ENCODE measurements at regions of chr6 and their contacts with region 1.

Region 1: GRCh38 chr6:15285682-15286294 is 39.9 kb downstream of the JARID2 start:
- DNase-seq: peak; percentile 37
- H3K4me3 ChIP-seq: no peak overlapping the region
- H3K27ac ChIP-seq: no peak overlapping the region
- H3K4me1 ChIP-seq: peaks cover 18% of the 10 kb centered on the region
- H3K27me3 ChIP-seq: no peaks in the 10 kb centered on the region
- CTCF ChIP-seq: no peak
- POLR2A ChIP-seq: no peak

Region 2: DNA sequence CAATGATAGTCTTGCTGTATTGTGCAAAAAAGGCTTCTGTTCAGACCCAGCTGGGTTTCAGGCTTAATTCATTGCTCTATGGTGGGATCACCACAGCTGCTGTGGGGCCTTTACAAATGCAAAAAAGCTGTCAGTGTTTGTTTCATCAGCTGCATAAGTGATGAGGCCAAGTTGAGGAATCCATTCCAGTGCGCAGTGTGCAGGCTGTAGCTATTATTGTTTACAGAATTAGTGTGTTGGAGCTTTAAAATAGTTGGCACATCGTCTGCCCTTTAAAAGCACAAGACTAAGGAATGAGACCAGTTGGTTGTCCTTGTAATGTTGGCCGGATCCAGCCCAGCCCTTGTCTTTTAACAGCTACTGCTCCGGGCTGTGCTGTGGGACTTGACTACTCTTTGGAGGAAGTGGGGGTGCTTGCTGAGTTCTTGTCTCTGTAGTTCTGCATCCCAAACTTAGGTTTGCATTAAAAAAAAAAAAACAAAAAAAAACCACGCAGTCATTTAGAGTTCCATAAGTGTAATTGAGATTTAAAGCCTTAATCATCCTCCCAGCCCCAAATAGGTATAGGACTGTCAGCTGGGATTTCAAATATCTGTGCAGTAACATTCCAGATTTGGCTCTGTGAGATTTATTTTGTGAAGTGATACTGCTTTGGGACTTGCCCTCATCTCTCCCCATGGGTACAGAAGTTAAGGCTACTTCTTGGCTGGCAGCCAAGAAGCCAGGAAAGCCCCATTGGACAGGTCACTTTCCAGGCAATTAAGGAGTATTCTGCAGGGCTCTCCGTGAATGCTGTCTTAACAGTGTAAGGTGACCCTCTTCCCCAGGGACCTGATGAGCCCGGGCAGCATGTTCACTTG is 20.7 kb before region 1 on chr6:
- CTCF ChIA-PET with region 1: interaction called, 3 read pairs
- POLR2A ChIA-PET with region 1: interaction called, 10 read pairs
- dilution Hi-C with region 1: no loop called
- intact Hi-C with region 1: loop called (anchors 2 kb)
- DNase-seq: no peak
- H3K4me3 ChIP-seq: no peak overlapping the region
- H3K27ac ChIP-seq: peak overlapping the region; percentile 67
- H3K4me1 ChIP-seq: peaks cover 29% of the 10 kb centered on the region
- H3K27me3 ChIP-seq: no peaks in the 10 kb centered on the region
- CTCF ChIP-seq: no peak
- POLR2A ChIP-seq: no peak

Region 3: GRCh38 chr6:15308435-15309213 is 22.8 kb after region 1 on chr6:
- CTCF ChIA-PET with region 1: no interaction called
- POLR2A ChIA-PET with region 1: no interaction called
- dilution Hi-C with region 1: no loop called
- intact Hi-C with region 1: loop called (anchors 2 kb)
- DNase-seq: peak; percentile 64
- H3K4me3 ChIP-seq: peak overlapping the region in 1 of 3 experiments; percentile 21
- H3K27ac ChIP-seq: peak overlapping the region; percentile 11
- H3K4me1 ChIP-seq: peaks cover 38% of the 10 kb centered on the region
- H3K27me3 ChIP-seq: no peaks in the 10 kb centered on the region
- CTCF ChIP-seq: no peak
- POLR2A ChIP-seq: no peak